ENCODE measurements at regions of chr11 and their contacts with region 1.

Region 1: GRCh38 chr11:67146516-67147226 is 27.6 kb downstream of the KDM2A start:
- DNase-seq: no peak
- H3K4me3 Mint-ChIP-seq: no peak overlapping the region
- H3K27ac Mint-ChIP-seq: no peak overlapping the region
- H3K4me1 Mint-ChIP-seq: peaks cover 10% of the 10 kb centered on the region
- H3K27me3 Mint-ChIP-seq: no peaks in the 10 kb centered on the region
- CTCF ChIP-seq: no peak

Region 2: DNA sequence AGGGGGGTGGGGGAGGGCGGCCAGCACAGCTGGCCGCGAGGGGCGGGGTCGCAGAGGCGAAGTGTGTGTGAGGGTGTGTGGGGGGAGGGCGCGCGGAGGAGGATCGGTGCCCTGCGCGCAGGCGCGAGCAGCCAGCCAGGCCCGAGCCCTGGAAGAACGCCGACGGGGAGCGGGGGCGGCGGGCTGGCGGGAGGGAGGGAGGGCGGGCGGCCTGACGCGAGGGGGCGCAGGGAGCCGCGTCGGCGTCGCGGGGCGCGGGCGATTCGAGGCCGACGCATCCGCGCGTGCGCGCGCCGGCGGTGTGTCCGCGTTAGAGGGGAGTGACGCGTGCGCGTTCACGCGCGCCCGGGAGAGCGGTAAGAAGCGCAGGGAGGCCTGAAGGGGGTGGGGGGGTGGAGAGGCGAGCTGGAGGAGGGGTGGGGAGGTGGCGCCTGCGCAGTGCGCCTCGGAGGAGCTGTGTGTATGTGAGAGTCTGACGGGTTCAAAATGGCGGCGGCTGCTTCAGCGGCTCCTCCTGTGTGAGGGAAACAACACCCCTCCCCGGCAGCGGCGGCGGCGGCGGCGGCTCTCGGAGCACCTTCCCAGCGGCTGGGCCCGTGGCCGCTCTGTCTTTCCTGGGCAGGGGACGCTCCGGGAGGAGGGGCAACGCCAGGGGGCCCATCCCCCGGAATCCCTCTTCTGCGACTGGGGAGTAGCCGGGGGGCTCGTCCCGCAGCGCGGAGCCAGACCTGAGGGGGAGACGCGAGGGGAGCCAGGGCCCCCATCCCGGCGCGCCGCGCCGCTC is 27.7 kb before region 1 on chr11 and contains the start of gene KDM2A:
- CTCF ChIA-PET with region 1: no interaction called
- intact Hi-C with region 1: no loop called
- DNase-seq: peak; percentile 96
- H3K4me3 Mint-ChIP-seq: peak within 1 kb of the TSS; percentile 90
- H3K27ac Mint-ChIP-seq: peak within 1 kb of the TSS; percentile 86
- H3K4me1 Mint-ChIP-seq: peaks cover 8% of the 10 kb centered on the region
- H3K27me3 Mint-ChIP-seq: no peaks in the 10 kb centered on the region
- CTCF ChIP-seq: peak; percentile 67
- total RNA-seq, gene KDM2A: 73.2 and 77.7 TPM in 2 replicates

Region 3: GRCh38 chr11:67195971-67196456 is 49.3 kb after region 1 on chr11:
- CTCF ChIA-PET with region 1: no interaction called
- intact Hi-C with region 1: no loop called
- DNase-seq: no peak
- H3K4me3 Mint-ChIP-seq: no peak overlapping the region
- H3K27ac Mint-ChIP-seq: no peak overlapping the region
- H3K4me1 Mint-ChIP-seq: no peaks in the 10 kb centered on the region
- H3K27me3 Mint-ChIP-seq: no peaks in the 10 kb centered on the region
- CTCF ChIP-seq: no peak

Region 4: DNA sequence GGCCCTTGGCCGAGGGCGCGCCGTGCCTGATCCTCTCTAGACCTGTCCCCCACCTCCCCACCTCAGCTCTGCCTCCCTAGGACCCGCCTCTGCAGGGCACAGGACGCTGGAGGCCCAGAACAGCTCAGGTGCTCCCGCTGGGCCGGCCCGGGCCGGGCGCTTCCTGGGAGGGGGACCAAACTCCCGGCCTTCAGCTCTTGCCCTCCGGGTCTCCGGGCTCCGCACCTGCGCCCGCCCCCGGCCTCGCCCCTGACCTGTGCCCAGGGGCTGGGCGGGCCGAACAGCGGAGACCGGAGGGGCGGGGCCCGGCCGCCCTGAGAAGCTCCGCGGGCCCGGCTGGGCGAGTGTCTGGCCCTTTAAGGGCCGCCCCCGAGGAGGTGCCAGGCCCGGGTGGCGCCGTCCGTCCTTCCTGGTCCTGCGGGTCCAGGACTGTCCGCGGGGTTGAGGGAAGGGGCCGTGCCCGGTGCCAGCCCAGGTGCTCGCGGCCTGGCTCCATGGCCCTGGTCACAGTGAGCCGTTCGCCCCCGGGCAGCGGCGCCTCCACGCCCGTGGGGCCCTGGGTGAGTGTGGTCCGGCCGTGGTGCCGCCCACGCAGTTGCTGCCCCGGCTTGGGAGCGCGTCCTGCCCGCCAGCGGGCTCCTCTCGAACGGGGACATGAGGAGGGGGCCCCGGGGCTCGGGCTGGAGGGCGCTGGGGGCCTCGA is 156.6 kb after region 1 on chr11 and contains the start of gene SSH3:
- CTCF ChIA-PET with region 1: no interaction called
- intact Hi-C with region 1: loop called (anchors 5 kb)
- DNase-seq: peak; percentile 90
- H3K4me3 Mint-ChIP-seq: peak within 1 kb of the TSS; percentile 70
- H3K27ac Mint-ChIP-seq: peak within 1 kb of the TSS; percentile 87
- H3K4me1 Mint-ChIP-seq: peaks cover 10% of the 10 kb centered on the region
- H3K27me3 Mint-ChIP-seq: no peaks in the 10 kb centered on the region
- CTCF ChIP-seq: no peak
- total RNA-seq, gene SSH3: 73.0 and 84.3 TPM in 2 replicates

Measured in Calu3 (cell line).